A549 (cell line): ENCODE measurements at regions of chr9 and their contacts with region 1.

Region 1: GRCh38 chr9:72871685-72872084 is 81.2 kb downstream of the ALDH1A1 start:
- DNase-seq: peak in 1 of 2 experiments; percentile 48
- ATAC-seq: peak in 1 of 2 experiments; percentile 43; a peak in 4 of 6 replicates
- H3K4me3 ChIP-seq: no peak overlapping the region
- H3K27ac ChIP-seq: peak overlapping the region; percentile 61 to 81
- H3K4me1 ChIP-seq: peaks cover 47% of the 10 kb centered on the region
- CTCF ChIP-seq: peak; percentile 88
- EP300 ChIP-seq: no peak
- POLR2A ChIP-seq: no peak
- RAD21 ChIP-seq: peak; percentile 77 to 91

Region 2: DNA sequence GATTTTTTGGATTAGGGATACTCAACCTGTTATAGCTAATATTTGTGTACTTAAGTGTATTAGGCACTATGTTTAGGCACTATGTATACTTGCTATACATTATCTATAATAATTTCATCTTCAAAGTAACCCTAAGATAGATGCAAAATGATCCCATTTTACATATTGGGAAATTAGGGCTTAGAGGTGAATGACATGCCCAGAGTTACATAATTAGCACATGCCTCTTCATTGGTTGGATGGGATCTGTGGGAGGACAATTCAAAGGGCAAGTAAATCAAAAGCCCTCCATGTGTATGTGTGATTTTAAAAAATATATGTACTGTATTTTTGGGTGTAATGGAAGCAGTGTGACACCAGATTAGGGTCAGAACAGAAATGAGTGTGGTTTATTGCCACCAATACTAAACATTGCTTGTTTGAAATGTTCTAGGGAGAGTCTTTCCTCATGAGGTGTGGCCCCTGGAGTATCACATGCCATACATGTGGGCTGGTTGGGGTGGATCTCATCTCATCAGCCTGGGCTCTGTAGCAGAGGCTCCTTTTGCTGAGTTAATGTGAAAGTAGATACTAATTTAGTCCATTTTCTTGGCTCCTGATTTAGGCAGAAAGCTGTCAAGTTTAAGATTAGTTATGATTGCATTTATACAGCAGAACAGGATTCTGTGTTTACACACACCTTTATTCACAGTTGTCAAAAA is 954.7 kb before region 1 on chr9:
- CTCF ChIA-PET with region 1: no interaction called
- POLR2A ChIA-PET with region 1: no interaction called
- DNase-seq: no peak
- ATAC-seq: no peak
- H3K4me3 ChIP-seq: no peak overlapping the region
- H3K27ac ChIP-seq: no peak overlapping the region
- H3K4me1 ChIP-seq: peaks cover 12% of the 10 kb centered on the region; the same call in 1 of the 3 replicates
- CTCF ChIP-seq: no peak
- EP300 ChIP-seq: no peak
- POLR2A ChIP-seq: no peak
- RAD21 ChIP-seq: no peak

Region 3: DNA sequence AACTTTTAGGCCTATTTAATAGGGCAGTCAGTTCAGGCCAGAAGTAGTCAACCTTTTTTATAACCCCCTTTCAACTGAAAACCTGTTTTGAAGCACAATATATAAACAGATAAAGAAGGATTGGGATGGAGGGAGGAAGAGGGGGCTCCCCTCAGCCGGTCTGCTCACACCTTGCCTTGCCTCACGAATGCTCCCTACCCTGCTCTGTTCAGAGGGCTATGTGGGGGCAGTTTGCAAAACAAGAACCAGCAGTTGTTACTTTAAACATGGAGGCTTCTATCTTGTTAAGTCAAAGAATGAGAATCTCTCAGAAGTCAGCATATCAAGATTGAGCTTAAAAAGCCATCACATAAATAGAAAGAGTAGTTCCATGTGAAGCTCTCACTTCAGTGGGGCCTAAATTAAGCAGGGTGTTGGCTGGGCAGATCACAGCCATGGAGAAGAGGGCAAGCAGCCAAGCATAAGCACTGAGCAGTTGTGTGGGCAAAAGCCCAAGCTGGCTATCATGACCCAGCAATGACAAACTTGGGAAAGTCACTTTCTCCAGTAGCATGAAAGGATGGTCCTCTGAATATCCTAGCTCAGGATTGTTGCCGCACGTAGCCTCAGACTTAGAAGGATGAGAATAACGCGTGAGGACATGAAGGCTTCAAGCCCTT is 10.6 kb after region 1 on chr9:
- CTCF ChIA-PET with region 1: interaction called, 22 read pairs
- POLR2A ChIA-PET with region 1: interaction called, 3 read pairs
- DNase-seq: no peak
- ATAC-seq: peak; percentile 6 to 17; a peak in 4 of 6 replicates
- H3K4me3 ChIP-seq: no peak overlapping the region
- H3K27ac ChIP-seq: no peak overlapping the region
- H3K4me1 ChIP-seq: peaks cover 14% of the 10 kb centered on the region; the same call in 2 of the 3 replicates
- CTCF ChIP-seq: no peak
- EP300 ChIP-seq: no peak
- POLR2A ChIP-seq: no peak
- RAD21 ChIP-seq: no peak

Region 4: GRCh38 chr9:73081979-73082657 is 210.4 kb after region 1 on chr9:
- CTCF ChIA-PET with region 1: interaction called, 18 read pairs
- POLR2A ChIA-PET with region 1: no interaction called
- DNase-seq: peak; percentile 49 to 92
- ATAC-seq: peak; percentile 58 to 61; a peak in 5 of 6 replicates
- H3K4me3 ChIP-seq: no peak overlapping the region
- H3K27ac ChIP-seq: peak overlapping the region; percentile 82 to 94
- H3K4me1 ChIP-seq: peaks cover 80% of the 10 kb centered on the region
- CTCF ChIP-seq: peak; percentile 94
- EP300 ChIP-seq: no peak
- POLR2A ChIP-seq: no peak
- RAD21 ChIP-seq: peak; percentile 94 to 95

Region 5: GRCh38 chr9:73176450-73176875 is 304.8 kb after region 1 on chr9:
- CTCF ChIA-PET with region 1: interaction called, 13 read pairs
- POLR2A ChIA-PET with region 1: no interaction called
- DNase-seq: peak; percentile 58 to 89
- ATAC-seq: peak; percentile 58 to 64
- H3K4me3 ChIP-seq: no peak overlapping the region
- H3K27ac ChIP-seq: peak overlapping the region; percentile 88
- H3K4me1 ChIP-seq: peaks cover 98% of the 10 kb centered on the region
- CTCF ChIP-seq: no peak
- EP300 ChIP-seq: peak; percentile 50 to 68; a peak in 3 of 5 replicates
- POLR2A ChIP-seq: no peak
- RAD21 ChIP-seq: no peak; a peak in 1 of 5 replicates